ENCODE measurements at regions of chr17 and their contacts with region 1.

Region 1: GRCh38 chr17:59837308-59838051 is 55.3 kb downstream of the TUBD1 start:
- DNase-seq: peak; percentile 44 to 58
- ATAC-seq: peak; percentile 82 to 87
- H3K4me3 ChIP-seq: peak overlapping the region; percentile 47 to 58 (median 54)
- H3K27ac ChIP-seq: peak overlapping the region; percentile 70 to 99 (median 91)
- H3K4me1 ChIP-seq: peaks cover 10 to 33% of the 10 kb centered on the region in 2 donors
- H3K27me3 ChIP-seq: no peaks in the 10 kb centered on the region
- CTCF ChIP-seq: no peak
- POLR2A ChIP-seq: peak; percentile 47 to 81

Region 2: GRCh38 chr17:59651346-59651745 is 186.1 kb before region 1 on chr17:
- in situ Hi-C with region 1: no loop called
- intact Hi-C with region 1: no loop called
- DNase-seq: no peak
- ATAC-seq: no peak
- H3K4me3 ChIP-seq: no peak overlapping the region
- H3K27ac ChIP-seq: no peak overlapping the region
- H3K4me1 ChIP-seq: peaks cover 8 to 18% of the 10 kb centered on the region in 2 donors
- H3K27me3 ChIP-seq: no peaks in the 10 kb centered on the region
- CTCF ChIP-seq: no peak
- POLR2A ChIP-seq: no peak

Region 3: DNA sequence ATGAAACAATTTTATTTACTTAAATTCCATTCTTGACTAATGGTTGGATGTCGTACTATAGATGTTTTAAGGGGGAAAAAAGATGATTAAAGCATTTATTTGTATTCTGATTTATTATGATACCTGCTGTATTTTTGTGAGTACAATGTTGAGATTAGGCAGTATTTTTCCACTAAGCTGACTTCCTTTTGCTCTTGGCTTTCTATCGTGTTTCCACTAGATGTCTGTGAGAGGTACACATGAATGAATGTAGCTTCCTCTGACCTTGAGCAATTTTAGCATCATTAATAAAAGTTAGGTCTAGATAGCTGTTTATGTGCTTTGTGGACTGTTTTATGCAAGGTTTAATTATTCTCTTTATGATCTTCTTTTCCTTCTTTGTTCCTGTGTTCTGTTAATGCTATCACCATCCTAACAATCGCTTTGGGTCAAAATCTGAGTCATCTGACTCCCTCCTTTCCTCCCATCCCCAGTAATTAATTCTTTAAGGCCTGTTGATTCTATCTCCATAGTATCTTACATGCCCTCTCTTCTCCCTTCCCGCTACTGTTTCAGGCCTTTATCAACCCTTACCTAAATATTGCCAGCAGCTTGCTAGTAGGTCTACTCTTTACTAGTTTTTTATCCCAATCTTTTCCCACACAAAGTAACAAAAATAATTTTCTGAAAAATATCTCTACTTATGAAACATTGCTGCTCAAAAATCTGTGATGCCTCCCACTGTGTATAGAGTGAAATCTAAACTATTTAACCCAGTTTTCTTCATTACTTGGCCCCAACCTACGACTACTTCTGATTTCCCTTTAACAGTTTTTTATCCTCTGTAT is 54.0 kb before region 1 on chr17:
- in situ Hi-C with region 1: no loop called
- intact Hi-C with region 1: loop called (anchors 5 kb)
- DNase-seq: no peak
- ATAC-seq: no peak
- H3K4me3 ChIP-seq: peak overlapping the region in 1 of 4 donors; percentile 5
- H3K27ac ChIP-seq: peak overlapping the region; percentile 41 to 68 (median 52)
- H3K4me1 ChIP-seq: peaks cover 4 to 34% of the 10 kb centered on the region in 2 donors
- H3K27me3 ChIP-seq: no peaks in the 10 kb centered on the region
- CTCF ChIP-seq: no peak
- POLR2A ChIP-seq: no peak

Region 4: GRCh38 chr17:59907467-59907866 is 70.0 kb after region 1 on chr17:
- in situ Hi-C with region 1: no loop called
- intact Hi-C with region 1: no loop called
- DNase-seq: no peak
- ATAC-seq: no peak
- H3K4me3 ChIP-seq: no peak overlapping the region
- H3K27ac ChIP-seq: no peak overlapping the region
- H3K4me1 ChIP-seq: no peaks in the 10 kb centered on the region
- H3K27me3 ChIP-seq: no peaks in the 10 kb centered on the region
- CTCF ChIP-seq: no peak
- POLR2A ChIP-seq: no peak

Measured in gastrocnemius medialis (tissue), 4 donors.